ENCODE measurements at regions of chr9 and their contacts with region 1.

Region 1: DNA sequence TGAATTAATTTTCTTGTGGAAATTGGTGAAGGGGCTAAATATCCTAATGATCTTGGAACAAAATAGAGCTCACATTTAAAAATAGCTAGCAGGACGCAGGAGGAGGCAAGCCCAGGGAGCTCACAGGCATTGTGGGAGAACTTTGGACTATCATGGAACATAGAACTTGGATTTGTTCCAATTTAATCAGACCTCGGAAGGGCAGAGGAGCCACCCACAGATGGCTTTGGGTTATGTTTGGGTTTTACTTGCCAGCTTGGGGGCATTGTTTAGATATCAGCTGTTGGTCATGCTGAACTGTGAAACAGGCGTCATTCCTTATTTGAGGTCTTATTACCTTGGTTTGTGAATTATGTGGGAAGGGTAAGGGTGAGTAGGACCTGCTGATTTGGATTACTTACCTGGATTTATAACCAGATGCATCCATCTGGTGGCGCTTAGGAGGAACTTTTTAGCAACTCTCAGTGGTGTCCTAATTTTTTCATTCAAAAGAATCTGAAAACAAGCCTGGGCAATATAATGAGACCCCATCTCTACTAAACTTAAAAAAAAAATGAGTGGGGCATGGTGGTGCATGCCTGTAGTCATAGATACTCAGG is 14.1 kb upstream of the PTGR1 start:
- H3K4me3 ChIP-seq: no peak overlapping the region
- H3K27ac ChIP-seq: no peak overlapping the region
- H3K4me1 ChIP-seq: no peaks in the 10 kb centered on the region
- CTCF ChIP-seq: no peak

Region 2: DNA sequence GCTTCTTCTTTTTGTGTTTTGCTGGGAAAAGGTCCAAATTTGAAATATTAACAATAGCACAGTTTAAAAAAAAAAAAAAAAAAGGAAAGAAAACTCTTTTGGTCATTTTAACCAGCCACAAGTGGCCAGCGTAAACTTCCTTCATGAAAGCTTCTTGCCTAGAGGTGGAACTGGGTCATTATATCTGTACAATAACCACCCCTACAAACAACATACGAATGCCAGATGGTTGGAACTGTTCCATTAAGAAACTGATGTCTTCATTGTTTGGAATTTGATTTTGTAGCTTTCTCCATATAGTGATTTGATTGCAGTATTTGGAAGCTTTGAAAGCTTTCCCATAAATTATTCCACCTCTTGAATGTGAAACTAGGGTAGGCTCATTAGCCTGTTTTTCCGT is 557.0 kb before region 1 on chr9:
- CTCF ChIA-PET with region 1: interaction called, 10 read pairs
- POLR2A ChIA-PET with region 1: no interaction called
- H3K4me3 ChIP-seq: no peak overlapping the region
- H3K27ac ChIP-seq: no peak overlapping the region
- H3K4me1 ChIP-seq: no peaks in the 10 kb centered on the region
- CTCF ChIP-seq: no peak